Activated CD4-positive, alpha-beta memory T cell treated with anti-CD3 and anti-CD28 coated beads for 36 hours (primary cell): ENCODE measurements at regions of chr17 and their contacts with region 1.

Region 1: GRCh38 chr17:77957857-77958715 is at the start of gene TNRC6C:
- DNase-seq: peak; percentile 100
- H3K4me3 Mint-ChIP-seq: peak within 1 kb of the TSS; percentile 94
- H3K27ac Mint-ChIP-seq: peak within 1 kb of the TSS; percentile 82
- H3K4me1 Mint-ChIP-seq: peaks cover 36% of the 10 kb centered on the region
- H3K27me3 Mint-ChIP-seq: no peaks in the 10 kb centered on the region
- total RNA-seq, gene TNRC6C: 10.9 to 15.6 TPM

Region 2: GRCh38 chr17:77772461-77772897 is 185.6 kb before region 1 on chr17:
- CTCF ChIA-PET with region 1: interaction called, 3 read pairs
- POLR2A ChIA-PET with region 1: interaction called, 3 read pairs
- intact Hi-C with region 1: loop called (anchors 2 kb)
- DNase-seq: peak; percentile 81
- H3K4me3 Mint-ChIP-seq: no peak overlapping the region
- H3K27ac Mint-ChIP-seq: no peak overlapping the region
- H3K4me1 Mint-ChIP-seq: peaks cover 9% of the 10 kb centered on the region
- H3K27me3 Mint-ChIP-seq: no peaks in the 10 kb centered on the region

Region 3: DNA sequence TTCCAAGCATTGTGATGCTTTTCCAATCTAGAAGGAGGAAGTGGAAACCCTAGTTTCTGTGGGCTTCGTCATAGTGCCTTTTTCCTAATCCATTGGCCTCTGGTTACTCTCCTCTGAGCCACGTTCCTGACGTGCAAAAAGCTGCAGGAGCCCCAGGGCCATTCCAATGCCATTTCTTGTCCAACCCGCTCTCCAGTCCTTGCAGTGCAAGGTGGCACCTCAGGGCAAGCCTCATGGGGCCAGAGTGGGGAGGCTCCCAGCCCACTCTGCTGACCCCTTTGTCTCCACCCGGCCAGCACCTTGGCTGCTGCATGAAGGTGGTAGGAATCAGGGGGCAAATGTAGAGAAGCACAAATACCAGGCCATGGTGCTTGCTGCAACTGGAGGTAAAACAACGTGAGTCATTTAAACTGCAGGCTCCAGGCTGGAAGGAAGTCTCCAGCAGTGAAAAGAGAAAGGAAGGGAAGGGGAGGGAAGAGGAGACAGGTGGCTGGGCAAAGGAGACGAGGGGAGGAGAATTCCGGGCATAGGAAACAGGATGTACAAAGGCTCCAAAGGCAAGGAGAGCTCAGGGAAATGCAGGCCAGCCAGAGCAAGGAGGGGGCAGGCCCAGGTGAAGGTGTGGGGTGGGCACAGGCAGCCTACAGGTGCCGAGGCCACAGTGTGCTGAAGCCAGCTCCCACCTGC is 167.8 kb before region 1 on chr17:
- CTCF ChIA-PET with region 1: no interaction called
- POLR2A ChIA-PET with region 1: no interaction called
- intact Hi-C with region 1: no loop called
- DNase-seq: no peak
- H3K4me3 Mint-ChIP-seq: no peak overlapping the region
- H3K27ac Mint-ChIP-seq: no peak overlapping the region
- H3K4me1 Mint-ChIP-seq: peaks cover under 1% of the 10 kb centered on the region
- H3K27me3 Mint-ChIP-seq: no peaks in the 10 kb centered on the region

Region 4: DNA sequence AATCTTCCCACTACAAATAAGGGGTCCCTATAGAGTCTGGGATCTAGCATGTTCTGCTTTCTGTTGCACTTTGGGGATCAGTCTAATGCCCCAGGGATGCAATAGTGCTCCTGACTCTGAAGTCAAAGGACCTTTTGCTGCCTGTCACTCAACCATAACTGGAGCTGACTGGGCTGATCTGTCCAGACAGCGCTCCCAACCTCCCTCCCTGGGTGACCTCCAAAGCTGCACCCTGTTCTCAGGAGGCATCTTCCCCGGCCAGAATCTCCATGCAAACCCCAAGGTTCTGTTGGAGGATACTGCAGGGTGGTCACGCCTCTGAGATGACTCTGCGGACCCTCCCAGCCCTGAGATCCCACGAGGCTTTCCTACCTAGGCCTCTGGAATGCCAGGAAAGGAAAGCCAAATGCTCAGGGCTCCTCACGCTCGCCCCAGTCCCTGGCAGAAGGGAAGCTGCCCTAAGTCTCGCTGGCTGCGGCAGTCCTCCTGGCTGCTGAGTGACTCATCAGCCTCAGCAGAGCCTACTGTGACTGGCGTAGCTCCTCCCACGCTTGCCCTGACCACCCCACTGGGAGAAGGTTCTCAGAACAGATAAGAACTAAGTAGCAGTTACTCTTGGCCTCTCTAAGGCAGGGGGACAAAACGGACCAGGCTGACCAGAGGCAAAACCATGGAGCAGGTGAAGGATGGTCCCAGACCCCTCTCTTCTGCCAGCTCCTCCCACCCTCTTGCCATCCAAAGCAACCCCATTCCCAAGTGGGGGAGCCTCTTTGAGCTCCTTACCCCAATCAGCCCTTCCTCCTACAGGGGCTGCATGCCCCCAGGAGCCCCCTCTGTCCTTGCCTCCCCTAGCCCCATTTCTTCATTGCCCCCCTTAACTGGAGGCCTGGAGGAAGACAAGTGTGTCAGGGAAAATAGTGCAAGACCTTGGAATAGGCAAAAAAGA is 123.6 kb before region 1 on chr17:
- CTCF ChIA-PET with region 1: no interaction called
- POLR2A ChIA-PET with region 1: interaction called, 13 read pairs
- intact Hi-C with region 1: no loop called
- DNase-seq: peak; percentile 89
- H3K4me3 Mint-ChIP-seq: no peak overlapping the region
- H3K27ac Mint-ChIP-seq: peak overlapping the region; percentile 43
- H3K4me1 Mint-ChIP-seq: peaks cover 59% of the 10 kb centered on the region
- H3K27me3 Mint-ChIP-seq: peaks cover 14% of the 10 kb centered on the region

Region 5: GRCh38 chr17:77881545-77881944 is 76.5 kb before region 1 on chr17:
- CTCF ChIA-PET with region 1: no interaction called
- POLR2A ChIA-PET with region 1: interaction called, 10 read pairs
- intact Hi-C with region 1: loop called (anchors 5 kb)
- DNase-seq: peak; percentile 87
- H3K4me3 Mint-ChIP-seq: peak overlapping the region; percentile 54
- H3K27ac Mint-ChIP-seq: peak overlapping the region; percentile 89
- H3K4me1 Mint-ChIP-seq: peaks cover 73% of the 10 kb centered on the region
- H3K27me3 Mint-ChIP-seq: no peaks in the 10 kb centered on the region

Region 6: DNA sequence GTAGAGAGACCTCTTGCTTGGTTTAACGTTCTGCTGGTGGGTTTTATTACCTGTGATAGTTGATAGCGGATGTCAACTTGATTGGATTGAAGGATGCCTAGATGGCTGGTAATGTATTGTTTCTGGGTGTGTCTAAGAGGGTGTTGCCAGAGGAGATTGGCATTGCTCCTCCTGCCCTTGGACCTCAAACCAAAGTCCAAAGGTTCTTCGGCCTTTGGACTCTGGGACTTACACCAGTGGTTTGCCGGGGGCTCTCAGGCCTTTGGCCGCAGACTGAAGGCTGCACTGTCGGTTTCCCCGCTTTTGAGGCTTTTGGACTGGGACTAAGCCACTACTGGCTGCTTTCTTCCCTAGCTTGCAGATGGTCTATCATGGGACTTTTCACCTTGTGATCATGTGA is 17.1 kb before region 1 on chr17:
- CTCF ChIA-PET with region 1: no interaction called
- POLR2A ChIA-PET with region 1: no interaction called
- intact Hi-C with region 1: no loop called
- DNase-seq: no peak
- H3K4me3 Mint-ChIP-seq: no peak overlapping the region
- H3K27ac Mint-ChIP-seq: no peak overlapping the region
- H3K4me1 Mint-ChIP-seq: no peaks in the 10 kb centered on the region
- H3K27me3 Mint-ChIP-seq: no peaks in the 10 kb centered on the region

Region 7: DNA sequence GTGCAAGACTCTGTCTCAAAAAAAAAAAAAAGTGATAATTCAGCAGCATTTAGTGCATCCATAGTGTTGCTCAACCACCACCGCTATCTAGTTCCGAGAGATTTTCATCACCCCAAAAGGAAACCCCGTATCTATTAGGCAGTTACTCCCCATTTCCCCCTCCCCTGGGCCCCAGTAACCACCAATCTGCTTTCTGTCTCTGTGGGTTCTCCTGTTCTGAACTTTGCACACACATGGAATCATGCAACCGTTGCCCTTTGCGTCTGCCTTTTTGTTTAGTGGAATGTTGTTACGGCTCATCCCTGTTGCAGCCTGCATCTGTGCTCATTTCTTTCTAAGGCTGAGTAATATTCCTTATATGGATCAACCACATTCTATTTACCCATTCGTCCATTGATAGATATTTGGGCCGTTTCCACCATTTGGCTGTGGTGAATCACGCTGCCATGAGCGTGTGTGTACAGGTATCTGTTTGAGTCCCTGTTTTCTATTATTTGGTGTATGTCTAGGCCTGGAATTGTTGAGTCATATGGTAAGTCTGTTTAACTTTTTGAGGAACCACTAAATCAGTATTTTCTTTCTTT is 201.6 kb after region 1 on chr17:
- CTCF ChIA-PET with region 1: no interaction called
- POLR2A ChIA-PET with region 1: no interaction called
- intact Hi-C with region 1: no loop called
- DNase-seq: peak; percentile 54
- H3K4me3 Mint-ChIP-seq: no peak overlapping the region
- H3K27ac Mint-ChIP-seq: peak overlapping the region; percentile 59
- H3K4me1 Mint-ChIP-seq: peaks cover 9% of the 10 kb centered on the region
- H3K27me3 Mint-ChIP-seq: no peaks in the 10 kb centered on the region

Region 8: DNA sequence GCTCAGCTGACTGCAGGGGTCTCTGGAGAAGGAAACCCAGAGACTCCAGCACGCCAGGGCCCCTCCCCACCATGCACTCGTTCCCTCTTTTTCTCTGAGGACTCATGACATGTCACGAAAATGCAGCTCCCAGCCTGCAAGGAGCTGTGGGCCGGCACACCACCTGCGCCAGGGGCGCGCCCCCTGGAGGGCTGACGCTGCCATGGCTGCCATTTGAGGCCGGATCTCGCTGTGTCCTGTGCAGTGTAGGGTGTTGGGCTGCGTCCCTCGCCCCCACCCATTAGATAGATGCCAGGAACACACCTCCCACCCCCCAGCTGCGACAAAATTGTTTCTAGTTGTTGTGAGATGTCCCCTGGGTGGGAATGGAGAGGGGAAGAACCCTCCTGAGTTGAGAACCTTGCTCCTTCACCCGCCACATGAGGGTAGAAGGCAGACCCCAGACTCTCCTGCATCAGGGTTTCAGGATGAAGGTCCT is 218.5 kb after region 1 on chr17:
- CTCF ChIA-PET with region 1: no interaction called
- POLR2A ChIA-PET with region 1: no interaction called
- intact Hi-C with region 1: no loop called
- DNase-seq: peak; percentile 83
- H3K4me3 Mint-ChIP-seq: no peak overlapping the region
- H3K27ac Mint-ChIP-seq: no peak overlapping the region
- H3K4me1 Mint-ChIP-seq: peaks cover 44% of the 10 kb centered on the region
- H3K27me3 Mint-ChIP-seq: no peaks in the 10 kb centered on the region